Esophagus muscularis mucosa (tissue), 4 donors: ENCODE measurements at regions of chr2 and their contacts with region 1.

Region 1: DNA sequence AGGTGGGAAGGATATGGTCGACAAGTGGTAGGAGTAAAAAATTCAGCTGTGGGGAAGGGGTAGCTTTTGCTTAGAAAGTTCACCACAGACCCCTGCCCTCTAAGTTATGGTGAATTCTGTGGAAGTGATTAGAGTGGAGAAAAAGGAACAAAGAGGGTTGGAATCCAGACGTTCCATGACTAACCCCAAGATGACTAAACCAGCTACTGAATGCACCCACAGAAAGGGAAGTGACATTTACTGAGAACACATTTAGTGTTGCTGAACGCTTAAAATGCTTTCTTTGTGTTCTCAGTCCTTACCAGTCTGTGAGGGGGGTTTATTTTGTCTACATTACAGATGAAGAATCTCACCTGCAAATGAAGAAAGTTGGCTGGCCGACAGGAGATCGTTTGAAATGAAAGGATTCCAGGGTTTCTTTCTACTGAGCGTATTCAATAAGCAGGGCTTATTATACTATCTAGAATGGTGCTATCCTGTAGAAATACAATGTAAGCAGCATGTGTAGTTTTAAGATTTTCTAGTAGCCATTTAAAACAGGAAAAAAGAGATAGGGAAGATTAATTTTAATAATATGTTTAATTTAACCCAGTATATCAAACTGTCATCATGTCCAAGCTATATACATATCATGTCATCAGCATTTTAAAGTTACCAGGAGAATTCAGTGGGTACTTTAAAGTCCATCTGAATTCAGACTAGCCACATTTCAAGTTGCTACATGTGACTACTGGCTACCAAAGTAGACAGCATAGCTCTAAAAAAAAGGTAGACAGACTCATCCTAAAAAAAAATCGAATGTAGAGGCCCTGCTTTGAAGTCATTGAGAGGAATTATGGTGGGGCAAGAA is 60.1 kb downstream of the LIMS1 start:
- DNase-seq: no peak
- H3K4me3 ChIP-seq: no peak overlapping the region
- H3K27ac ChIP-seq: peak overlapping the region; percentile 61 to 72 (median 68)
- H3K4me1 ChIP-seq: peaks cover 43 to 86% (median 78%) of the 10 kb centered on the region in 4 donors
- H3K27me3 ChIP-seq: no peaks in the 10 kb centered on the region
- CTCF ChIP-seq: no peak
- EP300 ChIP-seq: no peak
- POLR2A ChIP-seq: no peak

Region 2: DNA sequence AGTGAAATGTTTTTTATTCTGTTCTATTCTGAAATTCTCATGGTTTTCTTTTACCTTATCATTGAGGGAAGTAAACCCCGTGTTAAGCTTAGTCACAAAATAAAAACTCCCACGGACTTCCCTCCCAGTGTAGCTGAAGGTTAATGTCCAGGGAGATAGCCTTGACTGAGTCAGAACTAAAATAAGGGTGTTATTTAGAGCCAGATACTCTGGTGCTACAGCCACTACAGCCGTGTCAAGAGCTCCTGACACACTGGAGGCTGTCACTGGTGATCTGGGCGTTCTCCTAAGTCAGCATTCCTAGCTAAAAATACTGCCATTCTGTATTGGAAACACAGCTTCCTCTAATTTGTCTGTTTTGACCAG is 42.9 kb after region 1 on chr2:
- intact Hi-C with region 1: loop called (anchors 5 kb)
- DNase-seq: no peak
- H3K4me3 ChIP-seq: no peak overlapping the region
- H3K27ac ChIP-seq: peak overlapping the region; percentile 49 to 69 (median 54)
- H3K4me1 ChIP-seq: peaks cover 67 to 90% (median 86%) of the 10 kb centered on the region in 4 donors
- H3K27me3 ChIP-seq: no peaks in the 10 kb centered on the region
- CTCF ChIP-seq: no peak
- EP300 ChIP-seq: no peak
- POLR2A ChIP-seq: no peak

Region 3: DNA sequence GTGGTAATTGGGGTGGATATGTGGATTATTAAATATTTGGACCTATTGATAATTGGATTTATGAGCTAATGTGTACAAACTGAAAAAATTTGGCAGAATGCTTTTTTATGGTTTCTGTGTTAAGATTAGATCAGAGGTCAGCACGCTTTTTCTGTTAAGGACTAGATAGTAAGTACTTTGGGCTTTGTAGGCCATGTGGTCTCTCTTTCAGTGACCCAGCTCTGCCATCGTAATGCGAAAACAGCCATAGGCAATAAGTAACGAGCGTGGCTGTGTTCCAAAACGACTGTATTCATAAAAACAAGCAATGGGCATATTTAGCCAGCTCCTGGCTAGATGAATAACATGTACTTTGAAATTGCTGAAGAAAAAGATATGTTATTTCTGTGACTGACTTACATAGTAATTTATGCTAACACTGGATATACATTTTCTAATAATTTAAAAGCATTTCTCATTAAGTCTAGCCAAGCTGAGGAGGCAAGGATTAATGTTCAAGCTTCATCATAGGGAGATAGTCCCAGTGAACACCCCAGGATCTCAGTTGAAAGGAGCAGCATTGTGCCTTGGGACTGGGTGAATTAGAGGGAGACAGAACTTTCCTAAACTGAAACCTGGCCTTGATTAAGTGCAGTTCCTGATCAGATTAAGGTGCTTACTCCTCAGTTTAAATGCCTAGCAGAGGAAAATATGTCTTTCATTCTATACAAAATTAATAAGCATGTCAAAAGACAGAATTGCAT is 212.2 kb after region 1 on chr2:
- intact Hi-C with region 1: no loop called
- DNase-seq: no peak
- H3K4me3 ChIP-seq: no peak overlapping the region
- H3K27ac ChIP-seq: no peak overlapping the region
- H3K4me1 ChIP-seq: no peaks in the 10 kb centered on the region
- H3K27me3 ChIP-seq: no peaks in the 10 kb centered on the region
- CTCF ChIP-seq: no peak
- EP300 ChIP-seq: no peak
- POLR2A ChIP-seq: no peak